Activated CD8-positive, alpha-beta T cell treated with anti-CD3 and anti-CD28 coated beads for 36 hours (primary cell): ENCODE measurements at regions of chr6 and their contacts with region 1.

Region 1: DNA sequence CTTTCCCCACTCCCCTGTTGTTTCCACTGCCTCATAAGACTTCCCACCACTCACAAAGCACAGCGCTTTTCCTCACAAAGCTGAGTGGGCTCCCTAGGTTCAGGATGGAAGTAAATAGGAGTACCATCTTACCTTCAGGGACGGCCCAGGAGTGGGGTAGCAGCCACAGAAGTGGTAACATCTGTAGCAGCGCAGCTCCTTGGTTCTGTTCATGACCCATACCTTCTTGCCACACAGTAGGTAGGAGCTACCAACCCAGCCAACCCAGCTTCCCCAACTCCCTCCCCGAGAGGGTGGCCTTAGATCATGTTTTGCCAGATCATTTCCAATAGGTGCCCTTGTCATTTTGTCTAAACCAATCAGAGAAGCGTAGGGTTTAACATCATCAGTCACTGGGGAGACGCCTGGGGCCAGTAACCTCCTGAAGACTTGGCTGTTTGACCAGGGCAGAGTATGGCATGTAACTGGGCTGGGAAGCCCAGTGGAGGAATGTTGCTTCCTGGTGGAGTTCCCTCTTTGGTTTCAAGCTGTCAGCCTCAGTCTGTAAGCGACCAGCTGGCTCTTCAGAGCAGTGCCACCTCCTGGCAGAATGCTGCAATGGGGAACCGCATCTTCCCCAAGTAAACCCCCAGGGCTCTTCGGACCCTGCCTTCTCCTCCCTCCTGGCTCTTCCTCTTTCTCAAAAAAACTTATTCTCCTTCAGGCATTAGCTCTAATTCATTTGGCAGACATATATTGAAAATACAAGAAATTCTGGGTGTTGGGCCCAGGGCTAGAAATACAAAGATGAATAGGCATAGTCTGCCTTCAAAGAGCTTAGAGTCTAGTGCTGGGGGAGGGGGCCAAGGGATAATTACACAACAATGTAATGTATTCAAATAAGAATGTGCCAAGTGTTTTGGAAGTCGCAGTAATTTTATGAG is at the start of gene HLA-DMA:
- DNase-seq: peak; percentile 83
- ATAC-seq: peak; percentile 96
- H3K4me3 Mint-ChIP-seq: peak within 1 kb of the TSS; percentile 76
- H3K27ac Mint-ChIP-seq: peak within 1 kb of the TSS; percentile 77
- H3K4me1 Mint-ChIP-seq: peaks cover 65% of the 10 kb centered on the region
- H3K27me3 Mint-ChIP-seq: no peaks in the 10 kb centered on the region
- CTCF ChIP-seq: peak; percentile 98
- total RNA-seq, gene HLA-DMA: 16.2 TPM

Region 2: GRCh38 chr6:32685603-32686002 is 267.5 kb before region 1 on chr6:
- CTCF ChIA-PET with region 1: no interaction called
- POLR2A ChIA-PET with region 1: no interaction called
- intact Hi-C with region 1: no loop called
- DNase-seq: peak; percentile 34
- ATAC-seq: peak; percentile 94
- H3K4me3 Mint-ChIP-seq: peak overlapping the region; percentile 26
- H3K27ac Mint-ChIP-seq: peak overlapping the region; percentile 36
- H3K4me1 Mint-ChIP-seq: peaks cover 26% of the 10 kb centered on the region
- H3K27me3 Mint-ChIP-seq: peaks cover 3% of the 10 kb centered on the region
- CTCF ChIP-seq: no peak

Region 3: GRCh38 chr6:32838114-32838958 is 114.7 kb before region 1 on chr6 and contains the start of gene TAP2:
- CTCF ChIA-PET with region 1: interaction called, 35 read pairs
- POLR2A ChIA-PET with region 1: interaction called, 4 read pairs
- intact Hi-C with region 1: no loop called
- DNase-seq: peak; percentile 98
- ATAC-seq: peak; percentile 82
- H3K4me3 Mint-ChIP-seq: peak within 1 kb of the TSS; percentile 79
- H3K27ac Mint-ChIP-seq: peak within 1 kb of the TSS; percentile 99
- H3K4me1 Mint-ChIP-seq: peaks cover 74% of the 10 kb centered on the region
- H3K27me3 Mint-ChIP-seq: no peaks in the 10 kb centered on the region
- CTCF ChIP-seq: peak; percentile 95
- total RNA-seq, gene TAP2: 110 to 113 TPM

Region 4: DNA sequence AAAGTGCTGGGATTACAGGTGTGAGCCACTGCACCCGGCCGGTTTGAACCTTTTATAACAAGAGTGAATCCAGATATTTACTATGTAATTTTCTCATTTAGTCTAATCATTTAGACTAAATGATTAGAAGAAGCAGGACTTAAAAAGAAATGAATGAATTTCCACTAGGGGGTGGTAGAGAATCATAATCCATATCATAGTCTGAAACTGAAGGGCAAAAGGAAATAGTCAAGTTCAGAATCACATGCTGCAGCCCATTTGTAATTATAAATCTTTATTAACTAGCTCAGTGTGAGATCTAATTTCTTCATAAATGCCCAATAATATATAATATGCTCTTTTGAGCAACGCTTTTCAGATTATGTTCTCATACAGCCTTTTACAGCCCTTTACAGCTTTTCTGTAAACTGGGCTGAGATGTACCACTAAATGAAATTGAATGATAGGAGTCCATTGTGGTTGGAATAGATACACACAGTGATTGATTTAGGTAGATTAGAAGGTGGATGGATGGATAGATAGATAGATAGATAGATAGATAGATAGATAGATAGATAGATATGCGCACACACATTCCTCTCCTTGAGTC is 67.3 kb before region 1 on chr6:
- CTCF ChIA-PET with region 1: interaction called, 35 read pairs
- POLR2A ChIA-PET with region 1: interaction called, 6 read pairs
- intact Hi-C with region 1: loop called (anchors 5 kb)
- DNase-seq: no peak
- ATAC-seq: peak; percentile 70
- H3K4me3 Mint-ChIP-seq: no peak overlapping the region
- H3K27ac Mint-ChIP-seq: no peak overlapping the region
- H3K4me1 Mint-ChIP-seq: peaks cover 6% of the 10 kb centered on the region
- H3K27me3 Mint-ChIP-seq: no peaks in the 10 kb centered on the region
- CTCF ChIP-seq: peak; percentile 74

Region 5: GRCh38 chr6:32906539-32906938 is 46.5 kb before region 1 on chr6:
- CTCF ChIA-PET with region 1: interaction called, 34 read pairs
- POLR2A ChIA-PET with region 1: no interaction called
- intact Hi-C with region 1: no loop called
- DNase-seq: no peak
- ATAC-seq: no peak
- H3K4me3 Mint-ChIP-seq: no peak overlapping the region
- H3K27ac Mint-ChIP-seq: no peak overlapping the region
- H3K4me1 Mint-ChIP-seq: no peaks in the 10 kb centered on the region
- H3K27me3 Mint-ChIP-seq: peaks cover 5% of the 10 kb centered on the region
- CTCF ChIP-seq: no peak

Region 6: DNA sequence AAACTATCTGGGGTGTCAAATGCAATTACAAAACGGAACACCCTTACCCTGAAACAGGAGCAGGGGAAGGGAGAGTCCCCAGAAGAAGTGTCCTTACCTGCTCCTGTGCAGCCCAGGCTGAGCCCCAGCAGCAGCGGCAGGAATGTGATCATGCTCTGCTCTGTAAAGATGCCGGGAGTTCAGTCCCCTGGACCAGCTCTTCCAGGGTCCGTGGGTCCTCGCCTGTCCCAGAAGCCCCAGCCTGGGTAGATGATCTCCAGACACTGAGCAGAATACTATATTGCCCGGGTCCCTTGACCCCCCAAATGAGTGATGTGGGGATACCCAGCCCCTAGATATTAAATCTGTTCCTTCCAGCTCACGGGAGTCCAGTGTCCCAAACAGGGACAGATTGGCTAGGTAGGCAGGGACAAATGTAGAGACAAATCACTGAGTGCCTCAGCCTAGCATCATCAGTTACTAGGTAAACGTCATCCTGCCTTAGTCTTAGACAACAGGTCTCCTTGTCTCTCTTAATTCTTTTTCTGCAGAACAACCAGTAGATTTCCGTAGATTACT is 12.3 kb before region 1 on chr6 and contains the start of gene HLA-DMB:
- CTCF ChIA-PET with region 1: interaction called, 372 read pairs
- POLR2A ChIA-PET with region 1: interaction called, 18 read pairs
- intact Hi-C with region 1: no loop called
- DNase-seq: peak; percentile 69
- ATAC-seq: peak; percentile 76
- H3K4me3 Mint-ChIP-seq: peak within 1 kb of the TSS; percentile 77
- H3K27ac Mint-ChIP-seq: peak within 1 kb of the TSS; percentile 97
- H3K4me1 Mint-ChIP-seq: peaks cover 64% of the 10 kb centered on the region
- H3K27me3 Mint-ChIP-seq: no peaks in the 10 kb centered on the region
- CTCF ChIP-seq: no peak
- total RNA-seq, gene HLA-DMB: 3.5 to 3.6 TPM